PC-9 (cell line): ENCODE measurements at regions of chr7 and their contacts with region 1.

Region 1: GRCh38 chr7:132780843-132781242 is 204.6 kb upstream of the PLXNA4 start:
- DNase-seq: no peak
- H3K4me3 ChIP-seq: no peak overlapping the region
- H3K27ac ChIP-seq: no peak overlapping the region
- H3K4me1 ChIP-seq: no peaks in the 10 kb centered on the region
- H3K27me3 ChIP-seq: no peaks in the 10 kb centered on the region
- CTCF ChIP-seq: no peak

Region 2: GRCh38 chr7:132906193-132906835 is 125.5 kb after region 1 on chr7:
- CTCF ChIA-PET with region 1: interaction called, 11 read pairs
- POLR2A ChIA-PET with region 1: no interaction called
- intact Hi-C with region 1: no loop called
- DNase-seq: no peak
- H3K4me3 ChIP-seq: no peak overlapping the region
- H3K27ac ChIP-seq: no peak overlapping the region
- H3K4me1 ChIP-seq: no peaks in the 10 kb centered on the region
- H3K27me3 ChIP-seq: no peaks in the 10 kb centered on the region
- CTCF ChIP-seq: no peak